Endothelial cell of umbilical vein (primary cell): ENCODE measurements at regions of chr5 and their contacts with region 1.

Region 1: GRCh38 chr5:124741711-124742496 is 4.5 kb downstream of the ZNF608 start:
- DNase-seq: peak; percentile 64
- H3K4me3 ChIP-seq: peak overlapping the region in 1 of 3 experiments; percentile 99
- H3K27ac ChIP-seq: no peak overlapping the region
- H3K4me1 ChIP-seq: peaks cover 33% of the 10 kb centered on the region
- H3K27me3 ChIP-seq: no peaks in the 10 kb centered on the region
- CTCF ChIP-seq: no peak
- POLR2A ChIP-seq: no peak

Region 2: GRCh38 chr5:123937230-123937629 is 804.7 kb before region 1 on chr5:
- CTCF ChIA-PET with region 1: no interaction called
- POLR2A ChIA-PET with region 1: no interaction called
- dilution Hi-C with region 1: no loop called
- intact Hi-C with region 1: loop called (anchors 1 kb)
- DNase-seq: peak; percentile 68
- H3K4me3 ChIP-seq: no peak overlapping the region
- H3K27ac ChIP-seq: no peak overlapping the region
- H3K4me1 ChIP-seq: no peaks in the 10 kb centered on the region
- H3K27me3 ChIP-seq: no peaks in the 10 kb centered on the region
- CTCF ChIP-seq: peak; percentile 51 to 62
- POLR2A ChIP-seq: no peak

Region 3: GRCh38 chr5:124661317-124662141 is 80.4 kb before region 1 on chr5:
- CTCF ChIA-PET with region 1: interaction called, 10 read pairs
- POLR2A ChIA-PET with region 1: interaction called, 5 read pairs
- dilution Hi-C with region 1: no loop called
- intact Hi-C with region 1: loop called (anchors 1 kb)
- DNase-seq: peak; percentile 91
- H3K4me3 ChIP-seq: peak overlapping the region in 1 of 3 experiments; percentile 27
- H3K27ac ChIP-seq: peak overlapping the region; percentile 91
- H3K4me1 ChIP-seq: peaks cover 46% of the 10 kb centered on the region
- H3K27me3 ChIP-seq: no peaks in the 10 kb centered on the region
- CTCF ChIP-seq: no peak
- POLR2A ChIP-seq: peak; percentile 37

Region 4: GRCh38 chr5:124812754-124813358 is 71.0 kb after region 1 on chr5:
- CTCF ChIA-PET with region 1: no interaction called
- POLR2A ChIA-PET with region 1: no interaction called
- dilution Hi-C with region 1: no loop called
- intact Hi-C with region 1: loop called (anchors 1 kb)
- DNase-seq: peak; percentile 82
- H3K4me3 ChIP-seq: no peak overlapping the region
- H3K27ac ChIP-seq: peak overlapping the region; percentile 81
- H3K4me1 ChIP-seq: peaks cover 10% of the 10 kb centered on the region
- H3K27me3 ChIP-seq: no peaks in the 10 kb centered on the region
- CTCF ChIP-seq: no peak
- POLR2A ChIP-seq: no peak

Region 5: DNA sequence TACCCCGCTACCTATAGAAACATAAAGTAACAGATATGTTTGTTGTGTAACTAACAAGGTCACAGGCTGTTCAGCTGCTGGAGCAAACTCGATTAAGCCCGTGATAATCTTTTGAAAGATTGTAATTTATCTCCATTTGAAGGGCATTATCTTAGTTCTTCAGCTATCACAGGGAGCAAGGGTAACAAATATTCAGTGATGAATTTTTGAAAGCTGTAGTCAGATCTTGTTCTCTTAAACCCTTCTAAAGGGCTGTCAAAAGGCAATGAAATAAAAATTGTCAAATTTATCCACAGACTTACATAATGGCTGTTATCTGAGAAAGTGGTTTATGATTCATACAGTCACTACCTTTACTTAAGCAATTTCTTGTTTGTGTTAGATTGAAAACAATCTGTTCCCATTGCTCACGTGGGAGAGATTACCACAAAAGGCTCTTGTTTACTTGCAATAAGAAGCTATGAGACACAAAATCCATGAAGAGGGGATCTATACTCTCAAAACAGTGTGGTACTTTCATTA is 82.8 kb after region 1 on chr5:
- CTCF ChIA-PET with region 1: no interaction called
- POLR2A ChIA-PET with region 1: no interaction called
- dilution Hi-C with region 1: no loop called
- intact Hi-C with region 1: no loop called
- DNase-seq: peak; percentile 87
- H3K4me3 ChIP-seq: no peak overlapping the region
- H3K27ac ChIP-seq: no peak overlapping the region
- H3K4me1 ChIP-seq: peaks cover 7% of the 10 kb centered on the region
- H3K27me3 ChIP-seq: no peaks in the 10 kb centered on the region
- CTCF ChIP-seq: no peak
- POLR2A ChIP-seq: no peak